Aorta (tissue), 5 donors: ENCODE measurements at regions of chr5 and their contacts with region 1.

Region 1: GRCh38 chr5:154368041-154368800 is 77.6 kb upstream of the SAP30L start:
- DNase-seq: no peak
- ATAC-seq: peak; percentile 77
- H3K4me3 ChIP-seq: no peak overlapping the region
- H3K27ac ChIP-seq: peak overlapping the region; percentile 18 to 46
- H3K4me1 ChIP-seq: peaks cover 5 to 6% of the 10 kb centered on the region in 2 donors
- H3K27me3 ChIP-seq: no peaks in the 10 kb centered on the region

Region 2: GRCh38 chr5:154287136-154287535 is 81.1 kb before region 1 on chr5:
- intact Hi-C with region 1: loop called (anchors 5 kb)
- DNase-seq: peak in 1 of 2 donors; percentile 49
- ATAC-seq: peak; percentile 75
- H3K4me3 ChIP-seq: no peak overlapping the region
- H3K27ac ChIP-seq: peak overlapping the region in 1 of 2 donors; percentile 62
- H3K4me1 ChIP-seq: peaks cover 0 to 4% of the 10 kb centered on the region in 2 donors
- H3K27me3 ChIP-seq: no peaks in the 10 kb centered on the region

Region 3: DNA sequence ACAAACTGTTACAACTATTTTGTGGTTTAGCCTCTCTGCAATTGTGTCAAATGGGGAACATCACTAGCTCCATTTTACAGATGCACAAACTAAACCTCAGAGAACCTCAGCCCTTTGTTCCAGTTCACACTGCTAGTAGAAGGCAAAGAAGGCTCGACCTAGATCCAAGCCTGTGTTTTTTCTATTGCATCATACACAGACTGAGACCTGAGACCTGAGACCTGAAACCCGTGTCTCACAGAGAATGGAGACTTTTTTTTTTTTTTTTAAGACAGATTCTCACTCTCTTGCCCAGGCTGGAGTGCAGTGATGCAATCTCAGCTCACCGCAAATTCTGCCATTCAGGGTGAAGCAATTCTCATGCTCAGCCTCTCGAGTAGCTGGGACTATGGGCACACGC is 56.9 kb before region 1 on chr5:
- intact Hi-C with region 1: loop called in 1 of 2 experiments (anchors 5 kb)
- DNase-seq: no peak
- ATAC-seq: no peak
- H3K4me3 ChIP-seq: no peak overlapping the region
- H3K27ac ChIP-seq: no peak overlapping the region
- H3K4me1 ChIP-seq: no peaks in the 10 kb centered on the region
- H3K27me3 ChIP-seq: no peaks in the 10 kb centered on the region

Region 4: DNA sequence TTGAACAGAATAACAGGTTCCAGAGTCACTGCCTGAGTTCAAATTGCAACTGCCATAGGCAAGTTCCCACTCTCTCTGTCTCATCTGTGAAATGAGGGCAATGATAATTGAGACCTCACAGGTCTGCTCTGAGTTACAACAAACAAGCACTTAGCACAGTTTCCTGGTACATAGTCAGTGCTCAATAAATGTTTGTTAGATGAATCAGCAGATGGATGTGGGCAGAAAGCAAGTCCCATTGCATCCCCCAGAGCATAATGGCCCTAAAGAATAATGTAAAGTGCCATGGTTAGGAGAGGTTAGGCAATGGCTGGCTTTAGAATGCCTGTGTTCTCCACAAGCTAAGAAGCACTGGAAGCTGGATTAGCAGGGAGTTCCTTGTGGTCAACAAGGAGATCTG is 250.5 kb after region 1 on chr5:
- intact Hi-C with region 1: no loop called
- DNase-seq: no peak
- ATAC-seq: no peak
- H3K4me3 ChIP-seq: no peak overlapping the region
- H3K27ac ChIP-seq: no peak overlapping the region
- H3K4me1 ChIP-seq: no peaks in the 10 kb centered on the region
- H3K27me3 ChIP-seq: no peaks in the 10 kb centered on the region